T-cell (primary cell): ENCODE measurements at regions of chr7 and their contacts with region 1.

Region 1: DNA sequence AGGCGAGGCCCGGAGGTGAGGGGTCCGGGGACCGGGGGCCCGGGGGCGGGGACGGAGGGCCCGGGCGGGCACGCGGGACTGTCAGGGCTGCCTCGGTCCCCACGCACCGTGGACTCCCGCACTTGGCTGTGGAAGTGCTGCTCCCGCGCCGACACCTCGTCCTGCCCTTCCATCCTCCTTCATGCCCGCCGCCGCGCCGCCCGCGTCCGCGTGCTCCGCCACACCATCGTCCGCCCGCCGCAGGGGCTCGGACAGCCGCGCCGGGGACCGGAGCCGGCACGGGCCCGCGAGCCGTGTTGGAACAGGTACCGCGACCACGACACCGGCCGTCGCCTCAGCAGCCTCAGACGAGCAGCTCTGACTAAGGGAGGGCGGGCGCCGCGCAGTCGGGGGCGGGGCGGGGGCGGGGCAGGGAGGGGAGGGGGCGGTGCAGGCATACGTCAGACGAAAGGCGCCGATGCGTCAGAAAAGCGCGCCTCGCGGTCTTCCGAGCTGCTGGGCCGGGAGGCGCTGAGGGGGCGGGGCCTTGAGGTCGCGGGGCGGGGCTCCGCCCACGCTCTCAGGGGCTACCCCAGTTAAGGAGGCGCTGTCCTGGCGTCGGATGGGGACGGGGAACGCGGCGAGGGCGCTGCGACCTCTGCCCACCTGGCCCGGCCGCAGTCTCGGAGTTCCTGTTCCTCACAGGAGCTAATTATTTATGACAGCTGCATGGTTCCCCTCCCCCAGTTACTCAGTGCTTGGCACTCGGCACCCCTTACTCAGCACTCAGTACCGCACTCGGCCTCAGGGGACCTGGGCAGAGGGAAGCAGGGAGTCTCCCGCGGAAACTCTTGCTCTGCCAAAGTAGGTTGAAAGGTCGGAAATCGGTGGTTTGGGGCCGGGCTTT is at the start of gene LMBR1:
- DNase-seq: peak; percentile 82 to 97 (median 93)
- ATAC-seq: peak; percentile 85 to 89 (median 85)
- H3K4me3 ChIP-seq: peak within 1 kb of the TSS; percentile 81 to 90
- H3K4me3 Mint-ChIP-seq: peak within 1 kb of the TSS; percentile 88 to 94 (median 89)
- H3K27ac ChIP-seq: peak within 1 kb of the TSS; percentile 79
- H3K27ac Mint-ChIP-seq: peak within 1 kb of the TSS; percentile 76 to 86
- H3K4me1 ChIP-seq: peaks cover 3 to 21% of the 10 kb centered on the region in 2 experiments
- H3K4me1 Mint-ChIP-seq: peaks cover 41 to 51% (median 44%) of the 10 kb centered on the region in 3 donors
- H3K27me3 ChIP-seq: no peaks in the 10 kb centered on the region
- H3K27me3 Mint-ChIP-seq: no peaks in the 10 kb centered on the region
- total RNA-seq, gene LMBR1: 79.1 to 94.8 (median 83.8) TPM

Region 2: GRCh38 chr7:156854654-156855053 is 38.4 kb before region 1 on chr7:
- CTCF ChIA-PET with region 1: no interaction called
- POLR2A ChIA-PET with region 1: no interaction called
- DNase-seq: no peak
- ATAC-seq: no peak
- H3K4me3 ChIP-seq: no peak overlapping the region
- H3K4me3 Mint-ChIP-seq: no peak overlapping the region
- H3K27ac ChIP-seq: no peak overlapping the region
- H3K27ac Mint-ChIP-seq: no peak overlapping the region
- H3K4me1 ChIP-seq: no peaks in the 10 kb centered on the region
- H3K4me1 Mint-ChIP-seq: peaks cover 9 to 34% (median 29%) of the 10 kb centered on the region in 3 donors
- H3K27me3 ChIP-seq: no peaks in the 10 kb centered on the region
- H3K27me3 Mint-ChIP-seq: no peaks in the 10 kb centered on the region

Region 3: GRCh38 chr7:156927571-156928405 is 34.7 kb after region 1 on chr7:
- CTCF ChIA-PET with region 1: interaction called in 1 of 2 experiments, 10 read pairs
- POLR2A ChIA-PET with region 1: interaction called in 1 of 2 experiments, 3 read pairs
- DNase-seq: no peak
- ATAC-seq: no peak
- H3K4me3 ChIP-seq: no peak overlapping the region
- H3K4me3 Mint-ChIP-seq: no peak overlapping the region
- H3K27ac ChIP-seq: no peak overlapping the region
- H3K27ac Mint-ChIP-seq: no peak overlapping the region
- H3K4me1 ChIP-seq: peaks cover 0 to 18% of the 10 kb centered on the region in 2 experiments
- H3K4me1 Mint-ChIP-seq: peaks cover 25 to 37% (median 33%) of the 10 kb centered on the region in 3 donors
- H3K27me3 ChIP-seq: peaks cover under 1 to 12% of the 10 kb centered on the region in 2 experiments
- H3K27me3 Mint-ChIP-seq: peaks cover 3 to 9% of the 10 kb centered on the region in 2 donors

Region 4: GRCh38 chr7:156949541-156950380 is 56.7 kb after region 1 on chr7 and contains the start of gene NOM1:
- CTCF ChIA-PET with region 1: interaction called in 1 of 2 experiments, 16 read pairs
- POLR2A ChIA-PET with region 1: interaction called, 3 to 9 read pairs
- DNase-seq: peak; percentile 72 to 96 (median 89)
- ATAC-seq: peak; percentile 96 to 98 (median 96)
- H3K4me3 ChIP-seq: peak within 1 kb of the TSS; percentile 93
- H3K4me3 Mint-ChIP-seq: peak within 1 kb of the TSS; percentile 92 to 97 (median 96)
- H3K27ac ChIP-seq: no peak within 1 kb of the TSS
- H3K27ac Mint-ChIP-seq: peak within 1 kb of the TSS; percentile 74 to 79
- H3K4me1 ChIP-seq: peaks cover 11 to 31% of the 10 kb centered on the region in 2 experiments
- H3K4me1 Mint-ChIP-seq: peaks cover 26 to 33% (median 27%) of the 10 kb centered on the region in 3 donors
- H3K27me3 ChIP-seq: peaks cover 2 to 11% of the 10 kb centered on the region in 2 experiments
- H3K27me3 Mint-ChIP-seq: peaks cover under 1 to 9% of the 10 kb centered on the region in 2 donors
- total RNA-seq, gene NOM1: 31.7 to 47.8 (median 33.7) TPM